ENCODE measurements at regions of chr5 and their contacts with region 1.

Region 1: GRCh38 chr5:170552621-170553115 is 48.8 kb downstream of the KCNIP1 start:
- DNase-seq: peak; percentile 82
- H3K4me3 ChIP-seq: no peak overlapping the region
- H3K27ac ChIP-seq: no peak overlapping the region
- H3K27me3 ChIP-seq: peaks cover 4% of the 10 kb centered on the region
- CTCF ChIP-seq: no peak

Region 2: DNA sequence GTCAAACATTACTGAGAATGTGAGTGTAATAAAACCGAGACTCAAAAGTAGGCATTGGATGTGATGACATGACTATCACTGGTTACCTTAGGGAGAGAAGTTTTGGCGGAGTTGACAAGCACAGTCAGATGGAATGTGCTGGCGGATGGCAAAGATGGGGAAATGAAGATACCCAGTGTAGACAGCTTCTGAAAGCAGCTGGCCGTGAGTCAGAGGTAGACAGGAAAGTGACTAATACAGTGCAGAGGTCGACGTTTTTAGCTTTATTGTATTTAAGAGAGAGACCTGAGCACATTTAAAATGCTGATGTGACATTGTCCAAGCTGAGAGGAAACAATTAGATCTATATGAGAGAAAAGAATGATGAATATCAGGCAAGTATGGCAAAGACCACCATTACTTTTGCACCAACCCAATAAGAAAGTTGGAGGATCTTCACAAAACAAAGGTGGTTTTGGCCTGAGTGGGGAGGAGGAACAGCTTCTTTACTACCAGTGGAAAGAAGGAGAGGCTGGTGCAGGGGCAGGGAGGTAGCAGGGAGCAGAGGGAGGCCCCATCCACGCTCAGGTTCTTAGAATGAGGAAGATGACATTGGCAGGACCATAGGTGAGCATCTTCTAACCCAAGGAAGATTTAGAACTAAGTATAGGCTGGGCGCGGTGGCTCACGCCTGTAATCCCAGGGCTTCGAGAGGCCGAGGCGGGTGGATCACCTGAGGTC is 85.5 kb before region 1 on chr5:
- CTCF ChIA-PET with region 1: no interaction called
- POLR2A ChIA-PET with region 1: interaction called, 11 read pairs
- DNase-seq: peak; percentile 65
- H3K4me3 ChIP-seq: no peak overlapping the region
- H3K27ac ChIP-seq: no peak overlapping the region
- H3K27me3 ChIP-seq: no peaks in the 10 kb centered on the region
- CTCF ChIP-seq: no peak

Region 3: GRCh38 chr5:170538696-170539586 is 13.7 kb before region 1 on chr5:
- CTCF ChIA-PET with region 1: no interaction called
- POLR2A ChIA-PET with region 1: no interaction called
- DNase-seq: no peak
- H3K4me3 ChIP-seq: no peak overlapping the region
- H3K27ac ChIP-seq: peak overlapping the region; percentile 2
- H3K27me3 ChIP-seq: peaks cover 11% of the 10 kb centered on the region
- CTCF ChIP-seq: no peak

Measured in AG04450 (cell line).